ENCODE measurements at regions of chr17 and their contacts with region 1.

Region 1: DNA sequence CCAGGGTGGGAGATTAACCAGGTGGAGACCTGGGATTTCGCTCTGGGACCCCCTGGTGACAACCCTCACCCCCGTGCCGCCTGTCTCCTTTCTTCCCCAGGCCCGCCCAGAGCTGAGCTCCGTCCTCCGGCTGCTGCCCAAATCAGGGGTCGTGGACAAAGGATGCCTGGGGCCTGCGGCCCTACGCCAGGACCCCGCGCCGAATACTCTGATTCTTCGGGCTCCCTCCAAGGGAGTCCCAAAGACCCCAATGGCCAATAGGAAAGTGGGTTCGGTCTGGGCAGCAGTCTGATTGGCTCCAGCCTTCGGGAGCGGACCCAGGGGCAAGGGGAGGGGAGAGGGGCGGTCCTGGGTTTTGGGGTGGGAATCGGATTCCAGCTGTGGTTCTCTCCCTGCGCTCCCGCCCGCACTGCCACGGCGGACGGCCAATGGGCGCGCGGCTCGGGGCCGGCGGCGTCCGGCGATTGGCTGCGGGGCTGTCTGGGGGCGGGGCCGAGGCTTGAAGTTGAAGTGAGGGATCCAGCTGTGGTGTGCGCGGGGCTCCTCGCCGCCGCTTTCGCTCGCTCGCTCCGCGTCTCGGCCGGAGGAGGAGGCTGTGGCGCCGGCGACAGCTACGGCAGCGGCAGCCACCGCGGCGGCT is at the start of gene CACNA1G:
- DNase-seq: peak; percentile 99
- H3K4me3 ChIP-seq: peak within 1 kb of the TSS; percentile 49 to 74
- H3K27ac ChIP-seq: no peak within 1 kb of the TSS; a peak in 1 of 4 replicates
- H3K4me1 ChIP-seq: peaks cover 14 to 83% of the 10 kb centered on the region in 2 experiments
- H3K27me3 ChIP-seq: peaks cover 31% of the 10 kb centered on the region
- CTCF ChIP-seq: no peak
- EP300 ChIP-seq: no peak
- RAD21 ChIP-seq: peak; percentile 35
- polyA plus RNA-seq, gene CACNA1G: 0.15 and 0.21 TPM in 2 replicates

Region 2: GRCh38 chr17:50421308-50422051 is 138.8 kb before region 1 on chr17:
- CTCF ChIA-PET with region 1: no interaction called
- POLR2A ChIA-PET with region 1: no interaction called
- DNase-seq: no peak
- H3K4me3 ChIP-seq: peak overlapping the region in 1 of 2 experiments; percentile 40; a peak in 2 of 4 replicates
- H3K27ac ChIP-seq: peak overlapping the region; percentile 39 to 56; a peak in 3 of 4 replicates
- H3K4me1 ChIP-seq: peaks cover 10 to 21% of the 10 kb centered on the region in 2 experiments; a peak in 3 of 4 replicates
- H3K27me3 ChIP-seq: no peaks in the 10 kb centered on the region
- CTCF ChIP-seq: no peak
- EP300 ChIP-seq: no peak
- RAD21 ChIP-seq: no peak

Region 3: GRCh38 chr17:50583641-50584040 is 23.3 kb after region 1 on chr17:
- CTCF ChIA-PET with region 1: interaction called, 10 read pairs
- POLR2A ChIA-PET with region 1: interaction called, 3 read pairs
- DNase-seq: no peak
- H3K4me3 ChIP-seq: no peak overlapping the region
- H3K27ac ChIP-seq: no peak overlapping the region
- H3K4me1 ChIP-seq: peaks cover 0 to 36% of the 10 kb centered on the region in 2 experiments; a peak in 1 of 4 replicates
- H3K27me3 ChIP-seq: peaks cover 21% of the 10 kb centered on the region
- CTCF ChIP-seq: no peak
- EP300 ChIP-seq: no peak
- RAD21 ChIP-seq: no peak

Region 4: GRCh38 chr17:50604513-50604912 is 44.2 kb after region 1 on chr17:
- CTCF ChIA-PET with region 1: interaction called, 19 read pairs
- POLR2A ChIA-PET with region 1: interaction called, 4 read pairs
- DNase-seq: peak; percentile 99
- H3K4me3 ChIP-seq: no peak overlapping the region
- H3K27ac ChIP-seq: peak overlapping the region in 1 of 2 experiments; percentile 93; a peak in 2 of 4 replicates
- H3K4me1 ChIP-seq: peaks cover 11 to 81% of the 10 kb centered on the region in 2 experiments
- H3K27me3 ChIP-seq: no peaks in the 10 kb centered on the region
- CTCF ChIP-seq: no peak
- EP300 ChIP-seq: peak in 1 of 2 experiments; percentile 84; a peak in 2 of 4 replicates
- RAD21 ChIP-seq: no peak; the same call in 1 of the 2 replicates

Region 5: DNA sequence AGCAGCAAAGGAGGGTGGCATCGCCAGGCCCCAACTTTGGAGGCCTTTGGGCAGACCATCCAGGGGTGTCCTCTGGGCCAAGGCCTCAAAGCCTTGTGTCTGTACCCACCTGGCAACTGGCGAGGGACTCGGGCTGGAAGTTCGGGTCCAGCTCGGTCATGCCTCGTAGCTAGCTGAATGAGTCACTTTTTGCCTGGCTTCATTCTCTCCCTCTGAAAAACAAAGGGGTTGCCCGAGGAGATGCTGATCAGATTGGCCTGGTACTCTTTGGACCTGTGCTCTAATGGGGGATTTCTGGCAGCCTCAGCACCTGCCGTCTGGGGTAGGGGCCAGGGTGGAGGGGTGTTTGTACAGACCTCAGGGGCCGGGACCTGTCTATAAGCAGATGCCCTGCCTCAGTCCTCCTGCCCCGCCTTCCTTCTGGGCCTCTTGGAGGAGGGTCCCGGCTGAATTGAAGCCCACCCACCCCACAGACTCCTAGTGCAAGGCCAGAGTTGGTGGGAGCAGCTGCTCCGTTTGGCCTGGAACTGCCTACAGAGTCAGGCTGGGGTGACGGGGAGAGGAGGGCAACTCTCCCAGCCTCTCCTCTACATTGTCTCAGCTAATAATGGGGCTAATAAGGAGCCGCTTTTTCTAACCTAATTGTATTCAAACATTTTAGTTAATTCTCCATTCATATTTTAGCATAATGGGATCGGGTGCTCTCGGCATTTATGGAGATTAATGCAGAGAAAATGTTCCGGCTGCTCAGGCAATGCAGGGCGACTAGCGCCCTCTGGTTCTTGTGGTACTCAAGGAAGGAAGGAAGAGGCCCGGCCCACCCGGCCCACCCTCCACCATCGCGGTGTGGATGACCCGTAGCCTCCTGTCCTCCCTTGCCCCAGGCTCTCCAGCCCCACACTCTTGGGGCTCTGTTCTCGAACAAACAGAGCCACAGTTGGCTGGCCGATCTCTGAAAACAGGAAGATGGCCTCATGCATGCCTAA is 53.0 kb after region 1 on chr17:
- CTCF ChIA-PET with region 1: interaction called, 1,212 read pairs
- POLR2A ChIA-PET with region 1: interaction called, 3 read pairs
- DNase-seq: peak; percentile 67
- H3K4me3 ChIP-seq: no peak overlapping the region
- H3K27ac ChIP-seq: no peak overlapping the region
- H3K4me1 ChIP-seq: peaks cover 0 to 34% of the 10 kb centered on the region in 2 experiments; a peak in 1 of 4 replicates
- H3K27me3 ChIP-seq: no peaks in the 10 kb centered on the region
- CTCF ChIP-seq: no peak
- EP300 ChIP-seq: no peak
- RAD21 ChIP-seq: peak; percentile 46

Region 6: GRCh38 chr17:50620858-50621257 is 60.6 kb after region 1 on chr17:
- CTCF ChIA-PET with region 1: interaction called, 1,212 read pairs
- POLR2A ChIA-PET with region 1: interaction called, 6 read pairs
- DNase-seq: peak; percentile 74
- H3K4me3 ChIP-seq: no peak overlapping the region
- H3K27ac ChIP-seq: no peak overlapping the region
- H3K4me1 ChIP-seq: peaks cover 6 to 25% of the 10 kb centered on the region in 2 experiments; a peak in 2 of 4 replicates
- H3K27me3 ChIP-seq: no peaks in the 10 kb centered on the region
- CTCF ChIP-seq: peak; percentile 38; the same call in 1 of the 2 replicates
- EP300 ChIP-seq: no peak
- RAD21 ChIP-seq: peak; percentile 13

Region 7: GRCh38 chr17:50681263-50682210 is 121.2 kb after region 1 on chr17:
- CTCF ChIA-PET with region 1: interaction called, 13 read pairs
- POLR2A ChIA-PET with region 1: no interaction called
- DNase-seq: peak; percentile 94
- H3K4me3 ChIP-seq: no peak overlapping the region
- H3K27ac ChIP-seq: peak overlapping the region in 1 of 2 experiments; percentile 7; a peak in 1 of 4 replicates
- H3K4me1 ChIP-seq: peaks cover 11 to 14% of the 10 kb centered on the region in 2 experiments; a peak in 3 of 4 replicates
- H3K27me3 ChIP-seq: no peaks in the 10 kb centered on the region
- CTCF ChIP-seq: peak; percentile 88
- EP300 ChIP-seq: no peak; a peak in 1 of 4 replicates
- RAD21 ChIP-seq: peak; percentile 97

Region 8: GRCh38 chr17:50697663-50698274 is 137.5 kb after region 1 on chr17:
- CTCF ChIA-PET with region 1: interaction called, 14 read pairs
- POLR2A ChIA-PET with region 1: no interaction called
- DNase-seq: no peak
- H3K4me3 ChIP-seq: no peak overlapping the region
- H3K27ac ChIP-seq: no peak overlapping the region
- H3K4me1 ChIP-seq: peaks cover 10 to 25% of the 10 kb centered on the region in 2 experiments
- H3K27me3 ChIP-seq: no peaks in the 10 kb centered on the region
- CTCF ChIP-seq: no peak; the same call in 1 of the 2 replicates
- EP300 ChIP-seq: no peak
- RAD21 ChIP-seq: peak; percentile 31